Left cardiac atrium (tissue), 4 donors: ENCODE measurements at regions of chr9 and their contacts with region 1.

Region 1: GRCh38 chr9:121609845-121610570 is 41.4 kb upstream of the DAB2IP start:
- DNase-seq: peak; percentile 79
- ATAC-seq: peak; percentile 61 to 86

Region 2: DNA sequence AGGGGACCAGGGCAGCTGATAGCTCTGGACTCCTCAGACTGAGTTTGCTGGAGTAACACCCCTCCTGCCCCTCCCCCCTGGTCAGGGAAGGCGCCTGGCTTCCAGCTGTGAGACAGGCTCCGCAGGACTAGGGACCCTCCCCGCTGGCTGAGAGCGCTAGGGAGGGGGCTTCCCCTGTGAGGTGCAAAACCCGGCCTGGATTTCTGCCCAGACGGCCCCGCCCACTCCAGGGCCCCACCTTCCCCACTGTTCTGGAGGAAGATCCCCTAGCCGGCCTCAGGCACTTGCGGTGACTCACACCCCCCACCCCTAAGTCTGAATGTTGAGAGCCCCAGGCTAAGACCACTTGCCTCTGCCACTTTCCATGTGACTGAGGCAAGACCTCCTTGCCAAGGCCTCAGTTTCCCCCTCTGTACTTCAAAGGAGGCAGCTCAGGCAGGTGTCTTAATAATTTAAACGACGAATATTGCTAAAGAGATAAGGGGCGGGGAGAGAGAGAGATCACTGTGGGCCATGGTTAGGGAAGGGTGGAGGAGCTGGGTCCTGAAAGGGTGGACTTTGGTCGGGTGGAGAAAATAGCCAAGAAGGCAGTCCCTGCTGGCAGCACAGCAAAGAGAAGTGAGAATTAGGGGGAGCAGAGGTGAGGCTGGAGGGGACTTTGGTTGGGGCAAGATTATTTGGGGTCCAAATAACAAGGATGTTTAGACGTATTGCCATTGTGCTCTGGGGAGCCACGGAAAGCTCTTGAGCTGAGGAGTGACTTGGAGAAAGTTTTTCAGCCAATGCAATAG is 40.4 kb after region 1 on chr9:
- intact Hi-C with region 1: loop called in 1 of 2 experiments (anchors 5 kb)
- DNase-seq: peak; percentile 65
- ATAC-seq: peak; percentile 48 to 49